PC-3 (cell line): ENCODE measurements at regions of chr15 and their contacts with region 1.

Region 1: GRCh38 chr15:22936577-22937472 is 43.3 kb downstream of the CYFIP1 start:
- DNase-seq: no peak
- ATAC-seq: no peak
- H3K4me3 ChIP-seq: no peak overlapping the region
- H3K27ac ChIP-seq: no peak overlapping the region
- H3K4me1 ChIP-seq: peaks cover 9% of the 10 kb centered on the region
- H3K27me3 ChIP-seq: no peaks in the 10 kb centered on the region
- CTCF ChIP-seq: no peak

Region 2: DNA sequence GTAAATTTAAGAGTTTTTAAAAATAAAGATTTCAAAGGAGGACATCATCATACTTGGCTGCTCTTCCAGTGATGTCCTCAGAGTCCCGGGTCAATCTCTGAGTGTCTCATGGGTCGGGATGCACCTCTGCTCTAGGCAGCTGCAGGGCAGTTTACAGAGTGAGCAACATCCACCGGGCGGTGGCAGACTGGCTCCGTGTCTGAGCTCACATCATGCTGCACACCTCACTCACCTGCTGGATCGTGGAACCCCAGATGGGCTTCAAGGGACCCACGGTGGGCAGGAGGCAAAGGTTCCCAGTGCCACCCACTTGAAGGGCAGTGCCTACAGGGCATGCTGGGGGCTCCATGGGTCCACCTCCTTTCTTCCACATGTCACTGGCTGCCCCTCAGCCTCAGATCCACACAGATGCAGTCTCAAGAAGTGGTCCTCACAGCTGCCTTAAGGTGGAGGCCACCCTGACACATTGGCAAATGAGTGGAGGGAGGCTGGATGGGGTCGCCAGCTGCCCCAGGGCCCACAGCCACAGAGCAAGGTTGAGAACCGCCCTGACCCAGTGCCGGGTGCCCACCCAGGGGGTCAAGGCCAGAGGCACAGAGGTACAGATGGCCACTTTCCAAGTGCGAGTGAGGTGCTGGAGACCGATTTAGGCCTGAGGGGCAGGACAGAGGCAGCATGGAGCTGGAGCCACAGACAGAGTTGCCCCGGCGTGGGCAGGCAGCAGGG is 18.1 kb after region 1 on chr15:
- CTCF ChIA-PET with region 1: no interaction called
- POLR2A ChIA-PET with region 1: interaction called, 15 read pairs
- intact Hi-C with region 1: no loop called
- DNase-seq: peak; percentile 20
- ATAC-seq: peak; percentile 90
- H3K4me3 ChIP-seq: no peak overlapping the region
- H3K27ac ChIP-seq: no peak overlapping the region
- H3K4me1 ChIP-seq: no peaks in the 10 kb centered on the region
- H3K27me3 ChIP-seq: no peaks in the 10 kb centered on the region
- CTCF ChIP-seq: 0 out of 2 replicates have a peak, but pooled peaks have one; percentile 17

Region 3: DNA sequence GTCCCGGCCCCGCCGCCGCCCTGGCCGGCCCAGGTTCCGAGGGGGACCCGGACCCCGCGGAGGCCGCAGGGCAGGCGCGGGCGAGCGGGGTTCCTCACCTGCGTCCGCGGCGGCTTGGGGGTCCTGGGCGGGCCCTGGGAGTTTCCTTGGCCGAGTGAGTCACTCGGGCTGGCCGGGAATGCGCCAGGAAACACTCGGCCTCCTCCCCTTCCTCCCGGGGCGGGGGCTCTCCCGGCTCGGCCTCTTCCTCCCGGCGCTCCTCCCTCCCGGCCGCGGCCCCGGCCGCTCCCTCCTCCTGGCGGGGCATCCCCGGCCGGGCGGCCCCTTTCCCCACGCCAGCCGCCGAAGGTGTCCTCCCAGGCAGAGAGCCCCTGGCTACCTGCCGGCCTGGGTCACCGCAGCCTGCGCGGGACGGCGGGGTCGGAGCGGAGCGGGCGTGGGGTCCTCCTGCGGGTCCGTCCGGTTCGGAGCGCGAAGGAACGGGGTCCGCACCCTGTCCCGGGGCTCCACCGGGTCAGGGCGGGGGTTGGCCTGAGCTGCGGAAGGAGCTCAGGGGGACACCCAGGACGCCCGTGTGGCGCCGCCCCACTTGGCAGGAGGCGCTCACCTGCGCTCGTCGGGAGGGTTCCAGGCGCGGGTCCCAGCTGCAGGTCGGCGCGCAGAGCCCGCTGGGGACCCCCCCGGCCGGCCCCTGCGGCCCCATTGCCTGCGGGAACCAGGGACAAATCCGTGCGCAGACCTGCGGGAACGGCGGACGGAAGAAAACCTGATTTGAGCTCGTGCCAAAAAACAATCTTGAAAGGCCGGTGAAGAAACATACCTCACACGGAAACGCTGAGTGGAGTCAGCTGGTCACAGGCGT is 43.6 kb after region 1 on chr15 and contains the start of gene CYFIP1:
- CTCF ChIA-PET with region 1: no interaction called
- POLR2A ChIA-PET with region 1: no interaction called
- intact Hi-C with region 1: loop called (anchors 2 kb)
- DNase-seq: peak; percentile 91
- ATAC-seq: peak; percentile 82
- H3K4me3 ChIP-seq: peak within 1 kb of the TSS; percentile 86
- H3K27ac ChIP-seq: peak within 1 kb of the TSS; percentile 53
- H3K4me1 ChIP-seq: peaks cover 9% of the 10 kb centered on the region; the same call in 1 of the 2 replicates
- H3K27me3 ChIP-seq: no peaks in the 10 kb centered on the region
- CTCF ChIP-seq: no peak
- total RNA-seq, gene CYFIP1: 80.3 and 85.4 TPM in 2 replicates